ENCODE measurements at regions of chr6 and their contacts with region 1.

Region 1: GRCh38 chr6:110873981-110874879 is at the start of gene AMD1:
- DNase-seq: peak; percentile 96 to 97 (median 97)
- H3K4me3 ChIP-seq: peak within 1 kb of the TSS; percentile 44 to 87
- H3K4me3 Mint-ChIP-seq: peak within 1 kb of the TSS; percentile 96 to 100 (median 99)
- H3K27ac ChIP-seq: peak within 1 kb of the TSS; percentile 87
- H3K27ac Mint-ChIP-seq: peak within 1 kb of the TSS; percentile 94 to 100 (median 99)
- H3K4me1 ChIP-seq: peaks cover 29% of the 10 kb centered on the region
- H3K4me1 Mint-ChIP-seq: peaks cover 28 to 51% (median 32%) of the 10 kb centered on the region in 4 donors
- H3K27me3 ChIP-seq: no peaks in the 10 kb centered on the region
- H3K27me3 Mint-ChIP-seq: no peaks in the 10 kb centered on the region
- total RNA-seq, gene AMD1: 62.2 to 63.1 TPM

Region 2: DNA sequence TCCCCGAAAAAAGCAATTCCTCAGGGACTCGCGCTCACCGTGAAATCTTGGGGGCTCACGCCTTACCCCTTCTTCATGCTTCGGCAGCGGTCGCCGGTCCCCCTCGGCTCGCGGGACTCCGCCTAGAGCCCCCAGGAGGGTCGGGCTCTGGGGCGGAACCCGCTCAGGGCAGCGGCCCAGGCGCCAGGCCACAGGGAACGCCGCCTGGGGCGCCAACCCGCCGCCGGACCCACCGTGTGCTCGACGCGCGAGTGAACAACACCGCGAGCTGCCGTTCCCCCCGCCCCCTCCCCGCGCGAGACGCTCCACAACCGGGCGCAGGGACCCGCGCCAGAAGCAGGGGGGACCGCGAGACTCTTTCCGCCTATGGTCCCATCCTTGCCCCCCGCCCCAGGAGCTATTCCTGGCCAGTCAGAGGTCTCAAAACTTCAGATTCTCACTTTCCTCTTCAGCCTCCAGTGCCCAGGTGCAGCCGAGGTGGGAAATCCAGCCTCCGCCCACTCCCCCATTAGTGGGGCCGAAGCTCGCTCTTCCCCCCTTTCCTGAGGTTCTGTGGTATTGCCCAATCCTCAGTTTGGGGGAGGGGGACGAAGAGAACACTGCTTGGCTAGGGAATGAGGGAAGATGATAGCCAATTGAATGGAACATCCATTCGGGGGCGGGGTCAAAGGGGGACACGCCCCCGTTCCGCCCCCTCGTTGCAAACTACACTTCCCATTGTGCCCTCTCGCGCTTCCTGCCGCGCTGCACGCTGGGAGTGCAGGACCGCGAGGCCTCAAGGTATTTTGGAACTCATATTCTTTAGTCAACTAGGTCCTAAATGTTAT is 694.6 kb before region 1 on chr6 and contains the start of gene WASF1:
- CTCF ChIA-PET with region 1: interaction called, 3 read pairs
- POLR2A ChIA-PET with region 1: interaction called, 11 read pairs
- intact Hi-C with region 1: loop called (anchors 2 kb)
- DNase-seq: peak; percentile 90 to 93 (median 92)
- H3K4me3 ChIP-seq: peak within 1 kb of the TSS; percentile 77 to 92
- H3K4me3 Mint-ChIP-seq: peak within 1 kb of the TSS; percentile 82 to 92 (median 86)
- H3K27ac ChIP-seq: peak within 1 kb of the TSS; percentile 88
- H3K27ac Mint-ChIP-seq: peak within 1 kb of the TSS; percentile 24 to 90 (median 64)
- H3K4me1 ChIP-seq: peaks cover 46% of the 10 kb centered on the region
- H3K4me1 Mint-ChIP-seq: peaks cover 5 to 7% (median 6%) of the 10 kb centered on the region in 4 donors
- H3K27me3 ChIP-seq: no peaks in the 10 kb centered on the region
- H3K27me3 Mint-ChIP-seq: peaks cover 4 to 5% of the 10 kb centered on the region in 2 donors
- total RNA-seq, gene WASF1: 0.39 to 0.70 TPM

Region 3: DNA sequence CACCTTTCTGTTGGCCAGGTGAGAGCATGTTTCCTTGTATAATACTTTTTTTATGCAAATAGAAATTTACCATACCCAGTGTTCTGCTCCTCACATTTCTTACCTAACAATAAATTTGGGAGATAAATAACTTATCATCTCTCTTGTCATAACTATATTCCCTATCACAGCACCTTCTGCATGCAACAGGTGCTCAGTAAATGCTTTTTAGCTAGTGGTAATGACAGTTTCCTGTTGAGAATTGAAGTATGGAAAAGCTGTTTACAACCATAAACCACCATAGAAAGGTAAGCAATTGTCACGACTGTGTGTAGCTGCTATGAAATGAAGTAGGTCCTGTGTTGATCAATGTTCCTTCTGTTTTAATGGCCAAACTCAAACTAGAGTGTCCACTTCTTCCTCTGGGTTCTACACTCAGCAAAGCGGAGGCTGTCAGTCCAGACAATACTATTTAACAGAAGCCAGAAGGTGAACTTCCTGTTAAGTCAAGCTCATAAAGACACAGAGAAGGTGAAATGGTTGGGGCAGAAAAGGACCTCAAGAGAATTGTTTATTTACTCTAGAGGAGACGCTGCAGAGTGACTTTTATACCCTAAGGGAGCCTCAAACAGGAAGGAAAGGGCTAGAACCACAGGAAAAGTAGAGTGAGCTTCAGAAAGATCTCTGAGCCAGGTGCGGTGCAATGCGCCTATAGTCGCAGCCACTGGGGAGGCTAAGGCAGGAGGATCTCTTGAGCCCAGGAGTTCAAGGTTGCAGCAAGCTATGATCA is 313.8 kb before region 1 on chr6:
- CTCF ChIA-PET with region 1: interaction called, 8 read pairs
- POLR2A ChIA-PET with region 1: interaction called, 55 read pairs
- intact Hi-C with region 1: no loop called
- DNase-seq: peak in 4 of 5 donors; percentile 28 to 49 (median 41)
- H3K4me3 ChIP-seq: peak overlapping the region in 1 of 2 donors; percentile 12
- H3K4me3 Mint-ChIP-seq: peak overlapping the region; percentile 29 to 81 (median 76)
- H3K27ac ChIP-seq: peak overlapping the region; percentile 23
- H3K27ac Mint-ChIP-seq: peak overlapping the region; percentile 79 to 93 (median 91)
- H3K4me1 ChIP-seq: peaks cover 44% of the 10 kb centered on the region
- H3K4me1 Mint-ChIP-seq: peaks cover 38 to 74% (median 52%) of the 10 kb centered on the region in 4 donors
- H3K27me3 ChIP-seq: no peaks in the 10 kb centered on the region
- H3K27me3 Mint-ChIP-seq: no peaks in the 10 kb centered on the region

Region 4: DNA sequence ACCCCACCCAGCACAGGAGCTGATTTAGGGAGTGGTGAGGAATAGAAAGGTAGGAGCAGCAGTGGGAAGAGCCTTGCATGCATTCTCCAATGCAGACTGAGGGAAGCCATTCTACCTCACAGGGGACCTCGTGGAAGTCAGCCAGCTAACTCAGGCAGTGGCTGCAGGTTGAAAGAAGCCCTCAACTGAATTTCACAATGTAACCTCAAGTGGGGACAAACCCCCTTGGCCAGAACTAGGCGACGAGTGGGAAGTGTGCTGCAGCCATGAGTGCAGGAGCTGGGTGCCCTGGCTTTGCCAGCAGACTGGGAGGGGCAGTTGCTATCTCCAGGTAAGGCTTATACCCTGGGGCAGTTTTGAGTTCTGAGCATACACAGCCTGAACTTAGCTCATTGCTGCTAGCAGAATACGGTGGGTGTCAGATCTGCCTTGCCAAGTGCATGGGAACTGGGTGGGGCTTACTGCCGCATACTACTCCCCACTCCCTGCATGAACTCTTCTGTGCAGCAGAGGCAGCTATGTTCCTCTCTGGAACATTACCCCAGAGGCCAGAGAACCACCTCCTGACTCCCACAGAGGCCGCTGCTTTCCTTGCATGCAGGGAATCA is 185.5 kb before region 1 on chr6:
- CTCF ChIA-PET with region 1: interaction called, 66 read pairs
- POLR2A ChIA-PET with region 1: interaction called, 33 read pairs
- intact Hi-C with region 1: no loop called
- DNase-seq: no peak
- H3K4me3 ChIP-seq: no peak overlapping the region
- H3K4me3 Mint-ChIP-seq: peak overlapping the region in 6 of 8 donors; percentile 24 to 76 (median 43)
- H3K27ac ChIP-seq: no peak overlapping the region
- H3K27ac Mint-ChIP-seq: peak overlapping the region; percentile 19 to 92 (median 74)
- H3K4me1 ChIP-seq: peaks cover 30% of the 10 kb centered on the region
- H3K4me1 Mint-ChIP-seq: peaks cover 22 to 50% (median 31%) of the 10 kb centered on the region in 4 donors
- H3K27me3 ChIP-seq: no peaks in the 10 kb centered on the region
- H3K27me3 Mint-ChIP-seq: no peaks in the 10 kb centered on the region

Region 5: DNA sequence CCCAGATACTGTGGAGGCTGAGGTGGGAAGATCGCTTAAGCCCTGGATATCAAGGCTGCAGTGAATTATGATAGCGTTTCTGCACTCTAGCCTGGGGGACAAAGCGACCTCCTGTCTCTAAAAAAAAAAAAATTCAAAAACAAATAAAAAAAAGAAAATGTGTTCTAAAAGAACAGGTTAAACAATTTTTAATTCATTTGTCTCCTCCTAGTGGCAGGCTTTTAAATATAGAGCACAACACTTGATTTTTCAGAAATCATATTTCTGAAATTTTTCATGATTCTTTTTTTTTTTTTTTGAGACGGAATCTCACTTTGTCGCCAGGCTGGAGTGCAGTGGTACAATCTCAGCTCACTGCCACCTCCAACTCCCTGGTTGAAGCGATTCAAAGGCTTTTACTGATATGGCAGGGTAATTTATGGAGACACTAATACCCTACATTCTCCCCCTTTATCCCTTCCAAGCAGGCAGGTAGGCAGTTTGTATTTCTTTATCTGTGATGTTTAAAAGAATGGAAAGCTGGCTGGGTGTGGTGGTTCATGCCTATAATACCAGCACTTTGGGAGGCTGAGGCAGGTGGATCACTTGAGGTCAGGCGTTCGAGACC is 75.6 kb after region 1 on chr6:
- CTCF ChIA-PET with region 1: interaction called, 20 read pairs
- POLR2A ChIA-PET with region 1: interaction called, 152 read pairs
- intact Hi-C with region 1: loop called (anchors 2 kb)
- DNase-seq: peak in 4 of 5 donors; percentile 37 to 47 (median 40)
- H3K4me3 ChIP-seq: no peak overlapping the region
- H3K4me3 Mint-ChIP-seq: no peak overlapping the region
- H3K27ac ChIP-seq: no peak overlapping the region
- H3K27ac Mint-ChIP-seq: peak overlapping the region in 2 of 7 donors; percentile 23 to 42
- H3K4me1 ChIP-seq: no peaks in the 10 kb centered on the region
- H3K4me1 Mint-ChIP-seq: peaks cover 0 to 5% (median 2%) of the 10 kb centered on the region in 4 donors
- H3K27me3 ChIP-seq: no peaks in the 10 kb centered on the region
- H3K27me3 Mint-ChIP-seq: no peaks in the 10 kb centered on the region

Region 6: DNA sequence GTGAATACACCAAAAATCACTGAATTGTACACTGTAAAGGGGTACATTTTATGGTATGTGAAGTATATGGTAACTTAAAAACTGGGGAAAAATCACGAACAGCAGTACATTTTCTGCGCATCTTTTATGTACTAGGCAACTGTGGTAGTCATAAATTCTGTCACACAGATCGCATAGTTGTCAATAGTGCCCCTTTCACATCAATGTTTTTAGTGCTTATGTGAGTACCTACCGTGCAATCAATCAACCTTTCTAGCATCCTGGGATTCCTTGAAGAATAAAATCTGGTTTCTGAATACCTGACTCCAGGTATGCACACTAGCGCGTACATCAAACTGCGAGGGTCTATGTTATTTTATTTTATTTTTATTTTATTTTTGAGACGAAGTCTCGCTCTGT is 107.0 kb after region 1 on chr6:
- CTCF ChIA-PET with region 1: interaction called, 5 read pairs
- POLR2A ChIA-PET with region 1: interaction called, 73 read pairs
- intact Hi-C with region 1: loop called (anchors 1 kb)
- DNase-seq: peak in 2 of 5 donors; percentile 1 to 29
- H3K4me3 ChIP-seq: peak overlapping the region; percentile 20 to 95
- H3K4me3 Mint-ChIP-seq: peak overlapping the region; percentile 93 to 99 (median 98)
- H3K27ac ChIP-seq: peak overlapping the region; percentile 86
- H3K27ac Mint-ChIP-seq: peak overlapping the region; percentile 99 to 100 (median 100)
- H3K4me1 ChIP-seq: peaks cover 17% of the 10 kb centered on the region
- H3K4me1 Mint-ChIP-seq: peaks cover 28 to 49% (median 30%) of the 10 kb centered on the region in 4 donors
- H3K27me3 ChIP-seq: no peaks in the 10 kb centered on the region
- H3K27me3 Mint-ChIP-seq: no peaks in the 10 kb centered on the region

Region 7: DNA sequence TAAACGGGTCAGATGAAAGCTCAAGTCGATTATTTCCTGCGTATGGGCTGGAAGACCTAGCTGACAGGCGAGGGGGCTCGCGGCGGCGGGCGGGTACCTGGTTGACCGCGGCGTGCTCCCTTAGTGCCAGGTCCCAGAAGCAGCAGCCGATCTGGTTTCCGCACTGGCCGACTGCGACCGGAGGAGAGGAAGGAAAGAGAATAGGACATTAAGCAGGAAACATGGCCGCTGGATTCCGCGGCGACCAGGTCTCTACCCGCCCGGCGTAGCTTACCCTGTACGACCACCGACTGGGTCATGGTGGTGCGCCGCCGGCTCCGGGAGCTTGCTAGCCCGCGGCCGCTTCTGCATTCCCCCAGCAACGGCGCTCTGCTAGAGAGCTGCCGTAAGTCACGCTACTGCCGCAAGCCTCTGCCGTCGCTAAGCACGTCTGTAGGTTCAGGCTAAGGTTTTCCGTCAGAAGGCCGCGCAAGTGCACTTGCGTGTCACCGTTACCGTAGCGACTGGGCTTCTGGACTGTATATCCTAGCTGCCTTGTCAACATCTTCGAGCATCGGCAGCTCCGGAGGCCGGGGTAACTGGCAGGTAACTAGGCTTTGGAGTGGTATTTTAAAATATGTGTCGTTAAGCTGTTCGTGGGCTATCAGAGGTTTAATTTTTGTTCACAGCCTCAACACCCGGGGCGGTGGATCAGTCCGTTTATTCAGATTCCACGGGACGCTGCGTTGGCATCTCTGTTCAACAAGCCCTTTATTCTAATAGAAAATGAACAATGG is 1213.1 kb after region 1 on chr6 and contains the starts of genes FAM229B and TUBE1:
- CTCF ChIA-PET with region 1: no interaction called
- POLR2A ChIA-PET with region 1: interaction called, 24 read pairs
- intact Hi-C with region 1: loop called (anchors 1 kb)
- DNase-seq: peak; percentile 89 to 97 (median 93)
- H3K4me3 ChIP-seq: peak within 1 kb of the TSS; percentile 31 to 80
- H3K4me3 Mint-ChIP-seq: no peak within 1 kb of the TSS
- H3K27ac ChIP-seq: peak within 1 kb of the TSS; percentile 78
- H3K27ac Mint-ChIP-seq: peak within 1 kb of the TSS in 1 of 7 donors; percentile 59
- H3K4me1 ChIP-seq: peaks cover 15% of the 10 kb centered on the region
- H3K4me1 Mint-ChIP-seq: peaks cover 6 to 15% (median 8%) of the 10 kb centered on the region in 4 donors
- H3K27me3 ChIP-seq: peaks cover 15% of the 10 kb centered on the region
- H3K27me3 Mint-ChIP-seq: peaks cover 13 to 17% of the 10 kb centered on the region in 2 donors
- total RNA-seq, gene FAM229B: 1.7 to 1.9 TPM
- total RNA-seq, gene TUBE1: 40.6 to 45.2 TPM

Measured in CD4-positive, alpha-beta memory T cell (primary cell).